ENCODE measurements at regions of chr9 and their contacts with region 1.

Region 1: DNA sequence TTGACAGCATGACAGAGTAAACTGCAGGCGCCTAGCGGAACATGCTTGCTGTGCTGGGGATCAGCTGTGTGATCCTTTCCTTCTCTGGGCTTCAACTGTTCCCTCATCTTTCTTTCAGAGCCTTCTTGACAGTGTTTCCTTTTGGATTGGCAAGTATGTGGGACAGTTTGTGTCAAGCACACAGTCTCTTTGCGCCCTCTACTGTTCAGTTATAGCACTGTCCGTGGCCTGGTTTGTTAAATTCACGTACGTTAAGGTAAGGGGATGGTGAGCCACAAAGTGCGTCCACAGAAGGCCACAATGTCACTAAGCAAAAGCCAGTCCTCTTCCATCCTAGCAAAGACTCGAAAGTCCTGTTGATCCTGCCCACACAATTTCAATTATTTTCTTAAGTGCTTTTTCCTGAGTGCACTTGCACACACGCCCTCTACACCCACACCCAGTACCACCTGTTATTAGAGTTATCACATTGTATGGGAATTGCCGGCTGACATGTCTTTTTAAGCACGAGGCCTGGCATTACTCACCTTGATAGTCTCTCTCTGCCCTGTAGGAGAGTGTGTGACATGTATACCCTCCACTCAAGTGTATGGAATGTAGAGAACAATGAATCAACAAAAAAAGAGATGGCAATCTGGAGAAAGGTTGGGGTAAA is 22.5 kb upstream of the PTPN3 start:
- DNase-seq: no peak
- ATAC-seq: no peak
- H3K4me3 Mint-ChIP-seq: no peak overlapping the region
- H3K27ac Mint-ChIP-seq: no peak overlapping the region
- H3K4me1 Mint-ChIP-seq: no peaks in the 10 kb centered on the region
- H3K27me3 Mint-ChIP-seq: peaks cover 7% of the 10 kb centered on the region
- CTCF ChIP-seq: peak; percentile 24

Region 2: DNA sequence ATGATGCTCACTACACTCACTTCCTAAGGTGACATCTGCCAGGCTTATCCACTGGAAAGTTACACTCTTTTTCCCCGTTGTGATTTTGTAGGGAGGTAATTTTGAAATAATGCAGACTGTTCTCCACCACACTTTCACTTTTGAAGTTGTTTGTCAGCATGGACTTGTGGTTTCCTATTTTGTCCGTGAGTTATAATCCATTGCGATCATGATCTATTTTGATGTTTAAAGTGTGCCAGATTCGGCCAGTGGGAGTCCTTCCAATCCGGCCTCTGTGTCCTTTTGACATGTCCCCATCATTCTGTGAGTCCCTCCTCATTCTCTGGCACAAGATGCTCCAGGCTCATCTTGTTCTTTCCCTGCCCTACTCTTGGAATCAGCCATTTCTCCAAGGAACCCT is 1819.8 kb before region 1 on chr9:
- CTCF ChIA-PET with region 1: no interaction called
- POLR2A ChIA-PET with region 1: no interaction called
- intact Hi-C with region 1: loop called (anchors 5 kb)
- DNase-seq: no peak
- ATAC-seq: no peak
- H3K4me3 Mint-ChIP-seq: no peak overlapping the region
- H3K27ac Mint-ChIP-seq: no peak overlapping the region
- H3K4me1 Mint-ChIP-seq: no peaks in the 10 kb centered on the region
- H3K27me3 Mint-ChIP-seq: peaks cover 6% of the 10 kb centered on the region
- CTCF ChIP-seq: no peak

Region 3: DNA sequence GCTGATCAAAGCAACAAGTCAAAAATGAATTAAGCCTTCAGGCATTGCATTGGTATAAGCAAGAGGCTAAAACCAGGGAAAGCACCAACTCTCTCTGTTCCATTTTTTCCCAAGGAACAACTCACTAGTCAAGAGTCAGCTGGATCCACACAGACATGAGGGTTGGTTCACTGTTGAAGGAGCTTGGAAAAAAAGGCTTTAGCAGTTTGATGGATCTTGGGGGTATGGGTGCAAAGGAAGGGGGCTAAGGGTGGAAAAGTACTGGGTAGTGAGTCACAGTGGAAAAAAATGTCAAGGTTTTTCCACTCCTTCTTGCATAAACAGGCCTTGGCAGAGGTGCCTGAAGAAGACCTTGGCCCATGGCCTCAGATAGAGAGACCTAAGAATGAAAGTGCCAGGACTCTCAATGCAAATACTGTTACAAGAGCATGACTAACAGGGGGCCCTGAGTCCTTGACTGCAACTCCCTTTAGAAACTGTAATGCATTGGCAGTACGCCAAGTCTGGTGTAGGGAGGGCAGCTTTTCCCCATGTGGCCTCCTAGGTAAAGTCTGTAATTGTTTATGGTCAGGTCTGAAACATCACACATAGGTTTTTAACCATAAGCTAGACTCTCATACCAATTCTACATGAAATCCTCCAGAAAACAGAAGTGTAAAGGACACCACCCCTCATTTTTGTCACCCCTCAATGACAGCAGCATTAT is 634.8 kb before region 1 on chr9:
- CTCF ChIA-PET with region 1: no interaction called
- POLR2A ChIA-PET with region 1: no interaction called
- intact Hi-C with region 1: loop called (anchors 5 kb)
- DNase-seq: no peak
- ATAC-seq: peak; percentile 64
- H3K4me3 Mint-ChIP-seq: no peak overlapping the region
- H3K27ac Mint-ChIP-seq: no peak overlapping the region
- H3K4me1 Mint-ChIP-seq: peaks cover 5% of the 10 kb centered on the region
- H3K27me3 Mint-ChIP-seq: no peaks in the 10 kb centered on the region
- CTCF ChIP-seq: no peak

Region 4: GRCh38 chr9:109244157-109245132 is 276.2 kb before region 1 on chr9:
- CTCF ChIA-PET with region 1: no interaction called
- POLR2A ChIA-PET with region 1: no interaction called
- intact Hi-C with region 1: loop called (anchors 1 kb)
- DNase-seq: peak; percentile 42
- ATAC-seq: peak; percentile 88
- H3K4me3 Mint-ChIP-seq: no peak overlapping the region
- H3K27ac Mint-ChIP-seq: no peak overlapping the region
- H3K4me1 Mint-ChIP-seq: peaks cover 4% of the 10 kb centered on the region
- H3K27me3 Mint-ChIP-seq: peaks cover 13% of the 10 kb centered on the region
- CTCF ChIP-seq: peak; percentile 48

Region 5: GRCh38 chr9:109843641-109844040 is 323.0 kb after region 1 on chr9:
- CTCF ChIA-PET with region 1: no interaction called
- POLR2A ChIA-PET with region 1: no interaction called
- intact Hi-C with region 1: no loop called
- DNase-seq: no peak
- ATAC-seq: no peak
- H3K4me3 Mint-ChIP-seq: no peak overlapping the region
- H3K27ac Mint-ChIP-seq: no peak overlapping the region
- H3K4me1 Mint-ChIP-seq: no peaks in the 10 kb centered on the region
- H3K27me3 Mint-ChIP-seq: peaks cover 6% of the 10 kb centered on the region
- CTCF ChIP-seq: no peak

Measured in activated B cell treated with CpG ODN at 0.5 μM for 24 hours (primary cell).